Thyroid gland (tissue), 4 donors: ENCODE measurements at regions of chr4 and their contacts with region 1.

Region 1: DNA sequence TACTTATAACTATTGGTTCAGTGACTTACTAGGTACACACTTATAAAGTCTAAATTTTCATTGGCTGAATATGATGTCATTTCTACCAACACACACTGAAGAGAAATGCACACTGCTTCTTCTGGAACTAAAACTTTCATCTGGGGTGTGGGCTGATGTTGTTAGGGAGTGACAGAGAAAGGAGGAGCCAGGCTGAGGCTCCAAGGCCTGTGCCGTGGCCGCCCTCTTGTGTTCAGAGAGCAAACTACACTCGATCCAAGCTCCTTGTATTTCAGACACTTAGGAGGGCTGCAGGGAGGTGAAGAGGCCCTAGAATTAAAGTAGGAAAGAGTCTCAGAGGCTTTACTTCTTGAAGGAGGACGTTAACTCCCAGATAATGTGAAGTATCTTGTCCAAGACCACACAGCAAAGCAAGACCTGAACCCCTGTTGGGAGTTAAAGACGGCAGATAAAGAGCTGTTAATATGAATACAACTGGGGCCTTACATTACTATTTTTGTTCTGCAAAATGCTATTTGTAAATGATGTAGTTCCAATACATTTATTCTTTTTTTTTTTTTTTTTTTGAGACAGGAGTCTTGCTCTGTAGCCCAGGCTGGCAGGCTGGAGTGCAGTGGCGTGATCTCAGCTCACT is 137.5 kb downstream of the AFAP1 start:
- DNase-seq: peak; percentile 82 to 86
- H3K4me3 ChIP-seq: no peak overlapping the region
- H3K27ac ChIP-seq: peak overlapping the region in 2 of 3 donors; percentile 72 to 99
- H3K4me1 ChIP-seq: peaks cover 48% of the 10 kb centered on the region in 2 donors
- H3K27me3 ChIP-seq: no peaks in the 10 kb centered on the region
- CTCF ChIP-seq: peak; percentile 75 to 97 (median 91)
- POLR2A ChIP-seq: no peak

Region 2: DNA sequence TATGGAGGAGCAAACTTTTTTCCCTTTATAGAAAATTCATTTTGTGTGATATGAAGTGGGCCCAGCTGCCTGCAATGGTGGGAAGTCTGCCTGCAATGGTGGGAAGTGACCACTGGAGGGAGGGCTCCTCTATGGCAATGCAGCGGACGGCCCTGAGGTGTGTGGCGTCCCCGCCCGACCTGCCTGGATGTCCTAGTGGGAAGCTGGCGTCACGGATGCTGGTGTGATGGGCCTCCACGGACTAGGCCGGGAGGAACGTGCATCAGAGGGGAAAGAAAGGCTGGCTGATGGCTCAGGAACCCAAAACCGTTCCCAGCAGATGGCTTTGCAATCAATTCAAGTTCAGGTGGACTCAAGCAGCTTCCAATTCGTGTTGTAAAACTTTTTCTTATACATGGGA is 40.5 kb before region 1 on chr4:
- intact Hi-C with region 1: loop called (anchors 5 kb)
- DNase-seq: peak; percentile 74 to 80
- H3K4me3 ChIP-seq: no peak overlapping the region
- H3K27ac ChIP-seq: no peak overlapping the region
- H3K4me1 ChIP-seq: peaks cover 4 to 9% of the 10 kb centered on the region in 2 donors
- H3K27me3 ChIP-seq: no peaks in the 10 kb centered on the region
- CTCF ChIP-seq: peak; percentile 41 to 90 (median 77)
- POLR2A ChIP-seq: no peak

Region 3: DNA sequence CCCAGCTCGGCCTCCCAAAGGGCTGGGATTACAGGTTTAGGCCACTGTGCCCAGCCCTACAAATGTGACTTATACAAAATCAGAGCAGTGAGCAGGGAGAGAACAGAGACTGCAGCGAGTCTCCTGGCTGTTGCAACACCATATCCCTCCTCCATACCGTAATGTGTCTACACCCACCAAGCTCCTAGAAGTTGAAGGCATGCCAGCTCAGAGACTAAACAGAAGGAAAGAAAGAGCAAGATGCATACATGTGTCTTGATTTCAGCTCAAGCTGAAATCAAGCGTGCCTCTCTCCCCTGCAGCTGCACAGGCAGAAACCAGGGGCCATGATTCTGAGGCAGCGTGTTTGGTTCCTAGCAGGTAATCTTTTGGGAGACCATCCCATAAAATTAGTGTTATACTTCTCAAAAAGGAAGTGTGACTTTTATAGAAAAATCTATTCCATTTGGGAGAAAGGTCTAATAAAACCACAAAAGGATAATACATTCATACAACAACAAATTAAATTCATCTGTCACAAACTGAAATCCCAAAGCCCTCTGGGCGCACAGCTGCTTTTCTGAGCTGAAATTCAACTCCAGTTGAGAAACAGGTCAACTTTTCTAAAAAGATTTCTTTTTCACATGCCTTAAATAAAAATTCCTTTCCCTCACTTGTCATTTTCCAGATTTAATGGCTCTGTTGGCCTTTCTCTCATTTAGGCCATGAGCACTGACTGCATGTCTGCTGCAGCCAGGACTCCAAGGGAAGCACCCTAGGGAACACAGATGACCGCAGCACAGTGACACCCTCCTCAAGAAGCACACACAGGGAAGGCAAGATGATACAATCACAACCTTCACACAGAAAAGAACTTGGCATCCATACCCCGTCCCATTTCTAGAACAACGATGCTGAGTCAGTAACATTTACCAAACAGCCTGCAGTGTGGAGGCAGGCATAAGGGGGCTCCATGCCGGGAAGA is 103.0 kb after region 1 on chr4:
- intact Hi-C with region 1: no loop called
- DNase-seq: no peak
- H3K4me3 ChIP-seq: no peak overlapping the region
- H3K27ac ChIP-seq: no peak overlapping the region
- H3K4me1 ChIP-seq: peaks cover 12 to 18% of the 10 kb centered on the region in 2 donors
- H3K27me3 ChIP-seq: no peaks in the 10 kb centered on the region
- CTCF ChIP-seq: no peak
- POLR2A ChIP-seq: no peak

Region 4: DNA sequence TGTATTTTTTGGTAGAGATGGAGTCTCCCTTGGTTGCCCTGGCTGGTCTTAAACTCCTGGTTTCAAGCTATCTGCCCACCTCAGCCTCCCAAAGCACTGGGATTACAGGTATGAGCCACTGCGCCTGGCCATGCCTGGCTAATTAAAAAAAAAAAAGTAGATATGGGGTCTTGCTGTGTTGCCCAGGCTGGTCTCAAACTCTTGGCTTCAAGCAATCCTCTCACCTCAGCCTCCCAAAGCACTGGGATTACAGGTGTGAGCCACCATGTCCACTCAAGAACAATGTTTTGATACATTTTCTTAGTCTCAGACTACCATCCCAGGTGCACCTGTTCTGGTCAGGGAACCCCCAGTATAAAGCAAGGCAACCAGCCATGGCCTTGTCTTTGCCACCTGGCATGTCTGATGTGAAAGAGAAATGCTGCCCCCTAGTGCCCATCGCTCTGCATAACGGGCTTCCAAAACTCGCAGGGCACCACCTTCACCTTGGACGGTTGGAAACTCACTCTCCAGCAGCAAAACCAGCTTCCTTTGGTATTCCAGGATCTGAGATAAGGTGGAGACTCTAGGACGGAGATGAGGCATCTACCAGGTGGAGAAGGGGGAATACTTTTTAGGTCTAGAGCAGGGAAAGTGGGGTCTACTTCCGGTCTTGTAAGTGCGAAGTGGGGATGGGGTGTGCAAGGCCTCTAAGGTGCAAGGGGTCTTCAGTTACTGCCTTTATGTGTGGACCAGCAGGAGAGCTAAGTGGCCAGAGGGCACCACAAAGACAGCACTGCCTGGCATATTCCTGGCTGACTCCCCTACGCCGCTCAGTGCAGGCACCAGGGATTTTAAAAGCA is 185.2 kb after region 1 on chr4:
- intact Hi-C with region 1: loop called (anchors 5 kb)
- DNase-seq: peak; percentile 78 to 79
- H3K4me3 ChIP-seq: no peak overlapping the region
- H3K27ac ChIP-seq: no peak overlapping the region
- H3K4me1 ChIP-seq: peaks cover 12 to 14% of the 10 kb centered on the region in 2 donors
- H3K27me3 ChIP-seq: no peaks in the 10 kb centered on the region
- CTCF ChIP-seq: peak; percentile 74 to 92 (median 82)
- POLR2A ChIP-seq: no peak